ENCODE measurements at regions of chr1 and their contacts with region 1.

Region 1: DNA sequence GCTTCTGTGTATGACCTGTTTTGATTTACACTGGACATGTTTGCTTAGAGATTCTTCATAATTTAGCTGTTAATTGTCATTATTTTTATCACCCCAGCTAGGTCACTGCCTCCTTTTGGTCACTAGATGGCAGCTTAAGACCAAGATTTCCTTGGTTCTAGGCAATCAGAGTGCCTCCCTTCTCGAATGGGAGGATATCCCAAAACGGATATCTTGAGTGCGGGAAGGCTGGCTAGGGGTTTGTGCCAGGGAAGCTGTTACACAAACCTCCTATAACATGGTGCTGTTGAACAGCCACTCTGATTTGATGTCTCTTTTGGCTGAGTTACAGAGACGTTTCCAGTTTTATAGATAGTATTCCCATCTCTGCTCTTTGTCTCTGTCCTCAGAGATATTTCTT is 283.5 kb downstream of the S1PR1 start:
- DNase-seq: peak; percentile 84
- H3K4me3 ChIP-seq: no peak overlapping the region
- H3K27ac ChIP-seq: no peak overlapping the region
- H3K4me1 ChIP-seq: peaks cover 2% of the 10 kb centered on the region
- H3K27me3 ChIP-seq: no peaks in the 10 kb centered on the region
- CTCF ChIP-seq: peak; percentile 90

Region 2: DNA sequence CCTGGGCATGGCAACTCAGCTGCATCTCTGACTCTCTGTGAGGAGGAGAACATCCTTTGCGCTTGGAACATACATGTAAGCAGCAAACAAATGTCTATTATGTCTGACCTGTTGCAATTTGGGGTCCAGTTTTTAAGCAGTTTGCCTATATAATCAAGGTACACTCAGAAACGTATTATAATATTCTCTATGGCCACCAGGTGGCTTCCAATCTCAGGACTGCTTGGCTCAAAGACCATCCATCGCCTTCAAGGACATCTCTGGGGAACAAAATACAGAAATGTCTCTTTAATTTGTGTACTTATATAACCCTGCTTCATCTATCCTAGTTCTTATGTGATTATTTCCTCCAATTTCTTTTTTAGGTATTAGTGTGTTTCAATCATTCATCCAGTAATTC is 249.2 kb after region 1 on chr1:
- CTCF ChIA-PET with region 1: no interaction called
- POLR2A ChIA-PET with region 1: no interaction called
- intact Hi-C with region 1: loop called (anchors 10 kb)
- DNase-seq: peak; percentile 67
- H3K4me3 ChIP-seq: no peak overlapping the region
- H3K27ac ChIP-seq: no peak overlapping the region
- H3K4me1 ChIP-seq: peaks cover 8% of the 10 kb centered on the region
- H3K27me3 ChIP-seq: no peaks in the 10 kb centered on the region
- CTCF ChIP-seq: peak; percentile 71

Region 3: DNA sequence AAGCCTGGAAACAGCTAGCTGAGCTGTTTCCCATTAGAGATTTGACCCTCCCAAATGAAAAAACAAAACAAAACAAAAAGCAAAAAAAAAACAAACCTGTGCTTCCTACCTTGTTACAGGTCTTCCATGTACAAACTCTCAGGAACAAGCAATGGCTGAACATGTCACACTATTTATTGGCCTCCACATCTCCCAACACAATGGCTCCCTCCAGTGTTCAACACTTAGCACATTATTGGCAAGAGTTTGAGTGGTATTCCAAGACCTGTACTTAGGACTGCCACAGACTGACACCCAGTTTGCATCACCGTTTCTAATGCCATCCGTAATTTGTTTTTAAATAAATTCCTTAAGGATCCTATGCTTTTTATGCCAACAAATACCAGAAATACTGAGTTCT is 671.4 kb after region 1 on chr1:
- CTCF ChIA-PET with region 1: no interaction called
- POLR2A ChIA-PET with region 1: no interaction called
- intact Hi-C with region 1: loop called (anchors 1 kb)
- DNase-seq: peak; percentile 88
- H3K4me3 ChIP-seq: no peak overlapping the region
- H3K27ac ChIP-seq: no peak overlapping the region
- H3K4me1 ChIP-seq: peaks cover 29% of the 10 kb centered on the region
- H3K27me3 ChIP-seq: no peaks in the 10 kb centered on the region
- CTCF ChIP-seq: peak; percentile 78

Region 4: GRCh38 chr1:103514920-103515503 is 1994.7 kb after region 1 on chr1:
- CTCF ChIA-PET with region 1: interaction called, 4 read pairs
- POLR2A ChIA-PET with region 1: no interaction called
- intact Hi-C with region 1: loop called (anchors 5 kb)
- DNase-seq: peak; percentile 78
- H3K4me3 ChIP-seq: no peak overlapping the region
- H3K27ac ChIP-seq: no peak overlapping the region
- H3K4me1 ChIP-seq: no peaks in the 10 kb centered on the region
- H3K27me3 ChIP-seq: no peaks in the 10 kb centered on the region
- CTCF ChIP-seq: peak; percentile 78

Measured in A673 (cell line).